Activated CD4-positive, alpha-beta T cell treated with anti-CD3 and anti-CD28 coated beads for 36 hours (primary cell): ENCODE measurements at regions of chr5 and their contacts with region 1.

Region 1: DNA sequence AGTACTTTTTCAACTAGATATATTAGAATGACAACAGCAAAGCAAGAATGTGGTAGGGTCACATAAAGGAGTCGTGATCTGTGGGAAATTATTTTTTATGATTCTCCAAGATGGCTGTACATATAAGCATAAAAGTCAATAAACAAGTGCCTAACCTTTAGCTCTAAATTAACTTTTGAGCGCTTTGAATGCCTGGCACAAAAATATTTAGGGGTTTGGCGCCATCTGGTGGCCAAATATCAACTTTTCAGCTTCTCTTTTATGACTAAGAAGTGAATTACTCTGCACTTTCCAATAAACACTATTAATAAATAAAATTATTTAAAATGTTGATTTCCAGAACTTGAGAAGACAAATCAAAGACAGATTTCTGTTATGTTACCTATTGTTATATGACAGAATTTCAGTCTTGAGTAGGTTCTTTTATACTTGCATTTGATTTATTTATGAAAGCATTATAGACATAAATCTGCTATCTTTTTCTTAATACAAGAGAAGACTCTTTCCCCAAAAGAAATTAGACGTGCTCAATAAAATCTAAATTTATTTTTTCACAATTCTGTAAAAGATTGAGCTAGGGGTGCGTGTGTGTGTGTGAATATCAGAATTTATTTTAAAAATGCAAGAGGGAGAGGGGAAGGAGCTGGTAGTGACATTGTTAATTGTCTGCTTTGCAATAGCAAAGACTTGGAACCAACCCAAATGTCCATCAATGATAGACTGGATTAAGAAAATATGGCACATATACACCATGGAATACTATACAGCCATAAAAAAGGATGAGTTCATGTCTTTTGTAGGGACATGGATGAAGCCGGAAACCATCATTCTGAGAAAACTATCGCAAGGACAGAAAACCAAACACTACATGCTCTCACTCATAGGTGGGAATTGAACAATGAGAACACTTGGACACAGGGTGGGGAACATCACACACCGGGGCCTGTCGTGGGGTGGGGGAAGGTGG is 36.7 kb upstream of the ARRDC3 start:
- DNase-seq: peak; percentile 83
- ATAC-seq: no peak
- H3K4me3 Mint-ChIP-seq: no peak overlapping the region
- H3K27ac Mint-ChIP-seq: no peak overlapping the region
- H3K4me1 Mint-ChIP-seq: peaks cover 6% of the 10 kb centered on the region
- H3K27me3 Mint-ChIP-seq: no peaks in the 10 kb centered on the region

Region 2: DNA sequence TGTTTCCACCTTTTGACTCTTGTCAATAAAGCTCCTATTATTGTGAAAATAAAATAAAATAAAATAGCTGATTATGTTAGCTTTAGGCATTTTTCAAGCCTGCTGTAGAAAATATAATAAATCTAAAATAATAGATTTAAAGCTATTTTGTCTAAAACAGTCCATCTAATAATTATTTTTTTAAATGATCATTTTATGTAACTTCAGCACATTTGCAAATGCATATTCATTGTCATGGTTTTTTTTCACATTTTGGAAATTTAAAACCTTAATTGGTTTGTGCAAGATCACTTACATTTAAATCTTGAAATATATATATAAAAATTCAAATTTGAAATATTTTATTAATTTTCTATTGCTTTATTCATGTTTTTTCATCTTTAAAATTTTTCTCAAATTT is 701.5 kb before region 1 on chr5:
- CTCF ChIA-PET with region 1: no interaction called
- POLR2A ChIA-PET with region 1: no interaction called
- intact Hi-C with region 1: no loop called
- DNase-seq: no peak
- ATAC-seq: no peak
- H3K4me3 Mint-ChIP-seq: no peak overlapping the region
- H3K27ac Mint-ChIP-seq: no peak overlapping the region
- H3K4me1 Mint-ChIP-seq: no peaks in the 10 kb centered on the region
- H3K27me3 Mint-ChIP-seq: peaks cover 7% of the 10 kb centered on the region

Region 3: DNA sequence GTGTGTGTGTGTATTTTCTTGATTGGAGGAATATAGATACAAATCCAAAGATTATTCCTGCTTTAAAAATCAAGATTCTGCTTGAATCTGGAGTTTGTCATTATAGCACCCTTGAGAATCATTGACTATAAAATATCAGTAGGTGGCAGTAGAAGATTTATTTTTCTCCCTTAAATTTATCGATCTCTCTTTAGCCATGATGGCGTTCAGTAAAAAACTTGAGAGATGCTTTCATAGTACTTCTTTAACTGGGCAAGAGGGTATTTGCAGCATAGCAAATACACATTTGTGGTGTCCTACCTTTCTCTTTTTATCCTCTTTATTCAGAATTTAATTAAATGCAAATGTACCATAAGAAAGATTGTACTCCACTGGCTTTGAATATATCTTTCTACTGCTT is 553.5 kb before region 1 on chr5:
- CTCF ChIA-PET with region 1: interaction called, 41 read pairs
- POLR2A ChIA-PET with region 1: no interaction called
- intact Hi-C with region 1: loop called (anchors 1 to 2 kb)
- DNase-seq: no peak
- ATAC-seq: no peak
- H3K4me3 Mint-ChIP-seq: no peak overlapping the region
- H3K27ac Mint-ChIP-seq: no peak overlapping the region
- H3K4me1 Mint-ChIP-seq: peaks cover 7% of the 10 kb centered on the region
- H3K27me3 Mint-ChIP-seq: peaks cover 15% of the 10 kb centered on the region

Region 4: GRCh38 chr5:91101600-91102379 is 318.1 kb before region 1 on chr5:
- CTCF ChIA-PET with region 1: interaction called, 8 read pairs
- POLR2A ChIA-PET with region 1: no interaction called
- intact Hi-C with region 1: loop called (anchors 1 kb)
- DNase-seq: peak; percentile 76
- ATAC-seq: peak; percentile 89
- H3K4me3 Mint-ChIP-seq: no peak overlapping the region
- H3K27ac Mint-ChIP-seq: no peak overlapping the region
- H3K4me1 Mint-ChIP-seq: no peaks in the 10 kb centered on the region
- H3K27me3 Mint-ChIP-seq: peaks cover 13% of the 10 kb centered on the region

Region 5: DNA sequence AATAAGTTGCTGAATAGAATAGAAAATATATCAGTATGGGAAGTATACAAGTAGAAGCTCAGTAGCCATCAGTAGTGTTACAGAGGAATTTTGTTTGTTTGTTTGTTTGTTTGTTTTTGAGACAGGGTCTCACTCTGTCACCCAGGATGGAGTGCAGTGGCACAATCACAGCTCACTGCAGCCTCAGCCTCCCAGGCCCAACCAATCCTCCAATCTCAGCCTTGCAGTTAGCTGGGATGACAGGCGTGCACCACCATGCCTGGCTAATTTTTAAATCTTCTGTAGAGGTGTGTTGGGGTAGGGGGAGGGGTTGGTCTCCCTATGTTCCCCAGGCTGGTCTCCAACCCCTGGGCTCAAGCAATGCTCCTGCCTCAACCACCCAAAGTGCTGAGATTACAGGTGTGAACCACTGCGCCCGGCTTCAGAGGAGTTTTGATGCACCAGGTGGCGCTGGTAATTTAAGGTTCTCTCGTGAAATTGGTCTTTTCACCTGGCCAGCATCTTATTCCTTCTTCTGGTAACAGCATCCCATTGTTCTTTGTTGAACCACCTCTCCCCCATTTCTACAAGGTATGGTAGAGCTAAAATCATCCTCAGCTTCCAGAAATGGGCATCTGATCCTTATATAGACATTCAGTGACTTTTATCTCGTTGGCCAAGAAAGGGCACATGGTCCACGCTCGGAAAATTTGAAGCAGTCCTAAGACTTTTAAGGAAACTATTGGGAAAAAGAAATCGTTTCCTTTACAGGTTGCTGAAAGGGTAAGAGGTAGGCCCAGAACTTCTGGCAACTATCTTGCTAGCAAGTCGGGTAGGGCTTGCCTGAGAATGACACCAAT is 193.8 kb before region 1 on chr5:
- CTCF ChIA-PET with region 1: interaction called, 16 read pairs
- POLR2A ChIA-PET with region 1: no interaction called
- intact Hi-C with region 1: loop called (anchors 1 kb)
- DNase-seq: peak; percentile 79
- ATAC-seq: peak; percentile 75
- H3K4me3 Mint-ChIP-seq: no peak overlapping the region
- H3K27ac Mint-ChIP-seq: no peak overlapping the region
- H3K4me1 Mint-ChIP-seq: no peaks in the 10 kb centered on the region
- H3K27me3 Mint-ChIP-seq: peaks cover 7% of the 10 kb centered on the region

Region 6: GRCh38 chr5:91403438-91403837 is 16.4 kb before region 1 on chr5:
- CTCF ChIA-PET with region 1: interaction called, 21 read pairs
- POLR2A ChIA-PET with region 1: no interaction called
- intact Hi-C with region 1: no loop called
- DNase-seq: no peak
- ATAC-seq: no peak
- H3K4me3 Mint-ChIP-seq: no peak overlapping the region
- H3K27ac Mint-ChIP-seq: no peak overlapping the region
- H3K4me1 Mint-ChIP-seq: no peaks in the 10 kb centered on the region
- H3K27me3 Mint-ChIP-seq: no peaks in the 10 kb centered on the region

Region 7: DNA sequence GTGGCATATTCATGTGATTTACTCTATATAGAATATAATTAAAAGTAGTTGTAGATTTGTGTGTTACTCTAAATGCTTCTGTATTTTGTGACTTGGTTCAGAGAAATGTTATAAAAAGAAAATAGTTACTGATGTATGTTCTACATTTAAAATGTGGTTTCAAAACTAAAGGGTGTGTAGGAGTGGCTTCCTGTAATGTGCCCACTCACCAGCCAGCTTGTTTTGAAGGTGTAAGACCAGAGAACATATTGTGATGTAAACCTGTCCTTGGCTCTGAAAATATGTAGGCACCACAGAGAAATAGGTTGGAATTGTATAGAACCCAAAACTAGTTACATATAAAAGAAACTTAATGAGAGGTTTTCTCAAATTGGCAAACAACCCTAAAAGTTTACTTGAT is 14.5 kb after region 1 on chr5:
- CTCF ChIA-PET with region 1: interaction called, 42 read pairs
- POLR2A ChIA-PET with region 1: no interaction called
- intact Hi-C with region 1: no loop called
- DNase-seq: peak; percentile 16
- ATAC-seq: peak; percentile 42
- H3K4me3 Mint-ChIP-seq: no peak overlapping the region
- H3K27ac Mint-ChIP-seq: no peak overlapping the region
- H3K4me1 Mint-ChIP-seq: peaks cover 21% of the 10 kb centered on the region
- H3K27me3 Mint-ChIP-seq: no peaks in the 10 kb centered on the region